ENCODE measurements at regions of chr13 and their contacts with region 1.

Region 1: GRCh38 chr13:44523146-44524015 is 52.7 kb downstream of the TSC22D1 start:
- DNase-seq: no peak
- ATAC-seq: no peak
- H3K4me3 ChIP-seq: no peak overlapping the region
- H3K4me3 Mint-ChIP-seq: no peak overlapping the region
- H3K27ac ChIP-seq: no peak overlapping the region
- H3K27ac Mint-ChIP-seq: no peak overlapping the region
- H3K4me1 ChIP-seq: no peaks in the 10 kb centered on the region
- H3K4me1 Mint-ChIP-seq: no peaks in the 10 kb centered on the region
- H3K27me3 ChIP-seq: no peaks in the 10 kb centered on the region
- H3K27me3 Mint-ChIP-seq: no peaks in the 10 kb centered on the region
- CTCF ChIP-seq: no peak

Region 2: DNA sequence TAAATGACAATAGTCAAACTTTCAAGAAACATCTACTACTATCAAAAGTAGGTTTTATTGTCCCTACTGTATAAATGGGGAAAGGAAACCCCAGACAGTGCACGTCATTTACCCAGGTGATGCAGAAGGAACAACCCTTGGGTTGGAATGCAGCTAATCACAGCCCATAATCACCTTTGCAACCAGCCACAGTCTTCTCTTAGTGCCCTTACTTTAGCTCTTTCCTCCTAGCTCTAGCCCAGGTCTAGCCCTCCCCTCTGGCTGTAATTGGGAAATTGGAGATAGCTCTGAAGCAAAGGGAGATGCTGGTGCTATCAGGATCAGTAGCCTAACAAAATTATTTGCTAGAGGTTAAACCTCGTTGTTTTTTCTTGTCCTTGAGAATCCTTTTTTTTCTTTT is 78.2 kb after region 1 on chr13:
- CTCF ChIA-PET with region 1: no interaction called
- POLR2A ChIA-PET with region 1: no interaction called
- intact Hi-C with region 1: loop called in 1 of 2 experiments (anchors 5 kb)
- DNase-seq: no peak
- ATAC-seq: no peak
- H3K4me3 ChIP-seq: no peak overlapping the region
- H3K4me3 Mint-ChIP-seq: no peak overlapping the region
- H3K27ac ChIP-seq: no peak overlapping the region
- H3K27ac Mint-ChIP-seq: no peak overlapping the region
- H3K4me1 ChIP-seq: no peaks in the 10 kb centered on the region
- H3K4me1 Mint-ChIP-seq: no peaks in the 10 kb centered on the region
- H3K27me3 ChIP-seq: peaks cover 0 to 5% of the 10 kb centered on the region in 2 experiments
- H3K27me3 Mint-ChIP-seq: peaks cover 8% of the 10 kb centered on the region
- CTCF ChIP-seq: no peak